ENCODE measurements at regions of chr12 and their contacts with region 1.

Region 1: DNA sequence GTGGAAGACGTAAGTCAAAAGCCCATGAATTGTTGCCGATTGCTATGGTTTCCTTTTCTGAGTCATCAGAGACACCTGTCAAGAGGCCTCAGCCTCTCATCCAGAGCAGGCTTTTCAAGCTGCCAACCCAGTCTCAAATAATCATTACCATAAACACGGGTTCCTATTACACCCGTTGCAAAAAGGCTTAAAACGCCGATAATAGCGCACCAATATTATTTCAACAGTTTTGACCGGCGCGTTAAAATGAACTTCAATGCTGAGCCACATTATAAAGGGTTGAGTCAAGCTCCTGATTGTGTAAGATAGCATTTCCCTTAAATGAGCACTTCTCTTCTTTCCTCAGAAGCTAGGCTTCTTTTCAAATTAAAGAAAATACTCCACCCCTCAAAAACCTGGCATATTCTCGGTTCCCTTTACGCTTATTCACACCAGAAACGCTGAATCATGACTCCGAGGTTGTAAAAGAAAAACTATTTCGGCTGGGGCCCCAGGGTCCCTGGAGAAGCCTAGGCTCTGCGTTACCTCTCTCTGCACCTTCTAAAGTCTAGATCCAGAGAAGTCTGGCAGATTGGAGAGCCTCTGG is 1.4 kb downstream of the TMTC1 start:
- DNase-seq: no peak
- ATAC-seq: peak; percentile 60 to 74 (median 70)
- H3K4me3 ChIP-seq: peak overlapping the region; percentile 75
- H3K27ac ChIP-seq: peak overlapping the region; percentile 93
- H3K4me1 ChIP-seq: peaks cover 44% of the 10 kb centered on the region
- H3K27me3 ChIP-seq: no peaks in the 10 kb centered on the region
- CTCF ChIP-seq: no peak

Region 2: GRCh38 chr12:29552324-29552927 is 230.0 kb before region 1 on chr12:
- intact Hi-C with region 1: loop called (anchors 1 to 10 kb)
- DNase-seq: peak; percentile 58 to 79
- ATAC-seq: peak; percentile 69 to 86 (median 79)
- H3K4me3 ChIP-seq: no peak overlapping the region
- H3K27ac ChIP-seq: peak overlapping the region; percentile 69
- H3K4me1 ChIP-seq: peaks cover 34% of the 10 kb centered on the region
- H3K27me3 ChIP-seq: no peaks in the 10 kb centered on the region
- CTCF ChIP-seq: peak; percentile 94

Region 3: GRCh38 chr12:29725587-29726320 is 56.6 kb before region 1 on chr12:
- intact Hi-C with region 1: loop called in 1 of 2 experiments (anchors 5 kb)
- DNase-seq: peak; percentile 43 to 70
- ATAC-seq: peak; percentile 62 to 82 (median 76)
- H3K4me3 ChIP-seq: peak overlapping the region; percentile 26
- H3K27ac ChIP-seq: peak overlapping the region; percentile 85
- H3K4me1 ChIP-seq: peaks cover 69% of the 10 kb centered on the region
- H3K27me3 ChIP-seq: no peaks in the 10 kb centered on the region
- CTCF ChIP-seq: no peak

Region 4: DNA sequence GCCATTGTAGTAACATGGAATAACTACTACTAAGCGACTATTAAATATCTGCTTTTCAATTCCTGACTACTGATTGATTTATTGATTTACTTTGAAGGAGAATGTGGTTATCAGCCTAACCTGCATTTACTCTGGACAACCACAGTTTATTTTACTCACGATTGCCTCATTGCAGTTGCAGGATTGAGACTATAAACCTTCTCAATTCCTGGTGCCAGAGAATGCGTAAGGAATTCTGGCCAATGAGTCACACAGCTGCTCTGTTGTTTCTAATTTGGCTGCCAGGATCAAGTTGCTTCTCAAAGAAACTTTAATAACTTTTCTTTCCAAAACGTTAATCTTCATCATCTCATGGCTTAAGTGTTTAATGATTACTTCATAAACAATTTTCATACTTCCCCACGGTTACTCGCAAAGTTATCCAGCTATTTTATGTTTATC is 14.5 kb after region 1 on chr12:
- intact Hi-C with region 1: loop called in 1 of 2 experiments (anchors 2 kb)
- DNase-seq: no peak
- ATAC-seq: peak; percentile 89 to 99 (median 96)
- H3K4me3 ChIP-seq: peak overlapping the region; percentile 22
- H3K27ac ChIP-seq: peak overlapping the region; percentile 72
- H3K4me1 ChIP-seq: peaks cover 26% of the 10 kb centered on the region
- H3K27me3 ChIP-seq: no peaks in the 10 kb centered on the region
- CTCF ChIP-seq: no peak